ENCODE measurements at regions of chr5 and their contacts with region 1.

Region 1: GRCh38 chr5:171630027-171630669 is 155.5 kb upstream of the SMIM23 start:
- DNase-seq: peak; percentile 61
- H3K4me3 ChIP-seq: peak overlapping the region in 2 of 3 experiments; percentile 14 to 36
- H3K27ac ChIP-seq: no peak overlapping the region
- H3K4me1 ChIP-seq: peaks cover 9% of the 10 kb centered on the region
- H3K27me3 ChIP-seq: peaks cover 4 to 20% of the 10 kb centered on the region in 2 experiments
- CTCF ChIP-seq: peak; percentile 55 to 74
- POLR2A ChIP-seq: no peak

Region 2: GRCh38 chr5:170892196-170892595 is 738.0 kb before region 1 on chr5:
- CTCF ChIA-PET with region 1: no interaction called
- POLR2A ChIA-PET with region 1: no interaction called
- dilution Hi-C with region 1: no loop called
- intact Hi-C with region 1: no loop called
- DNase-seq: peak; percentile 57
- H3K4me3 ChIP-seq: no peak overlapping the region
- H3K27ac ChIP-seq: peak overlapping the region; percentile 57
- H3K4me1 ChIP-seq: peaks cover 6% of the 10 kb centered on the region
- H3K27me3 ChIP-seq: no peaks in the 10 kb centered on the region
- CTCF ChIP-seq: no peak
- POLR2A ChIP-seq: no peak

Region 3: GRCh38 chr5:171450423-171451331 is 179.5 kb before region 1 on chr5:
- CTCF ChIA-PET with region 1: no interaction called
- POLR2A ChIA-PET with region 1: no interaction called
- dilution Hi-C with region 1: no loop called
- intact Hi-C with region 1: loop called (anchors 1 kb)
- DNase-seq: peak; percentile 70
- H3K4me3 ChIP-seq: peak overlapping the region in 2 of 3 experiments; percentile 17 to 23
- H3K27ac ChIP-seq: peak overlapping the region; percentile 95
- H3K4me1 ChIP-seq: peaks cover 15% of the 10 kb centered on the region
- H3K27me3 ChIP-seq: peaks cover 0 to 2% of the 10 kb centered on the region in 2 experiments
- CTCF ChIP-seq: no peak
- POLR2A ChIP-seq: peak; percentile 32

Region 4: DNA sequence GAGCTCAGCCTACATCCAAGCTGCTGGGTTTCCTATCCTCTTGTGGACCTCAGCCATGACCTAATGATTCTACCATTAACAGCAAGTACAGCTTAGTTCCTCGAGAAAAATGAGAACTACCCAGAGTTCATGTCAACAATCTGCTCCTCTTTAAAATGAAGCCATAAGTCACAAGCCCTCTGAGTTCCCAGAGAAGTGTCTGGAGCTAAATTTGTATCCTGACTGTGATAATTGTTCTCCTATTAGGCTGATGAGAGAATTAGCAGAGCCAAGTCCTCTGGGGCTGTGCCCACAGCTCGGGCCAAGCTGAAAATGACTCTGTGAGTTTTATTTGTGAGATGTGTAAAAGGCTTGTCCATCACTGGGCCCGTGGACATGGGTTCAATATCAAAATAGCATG is 10.3 kb after region 1 on chr5:
- CTCF ChIA-PET with region 1: interaction called, 23 read pairs
- POLR2A ChIA-PET with region 1: no interaction called
- dilution Hi-C with region 1: no loop called
- intact Hi-C with region 1: no loop called
- DNase-seq: no peak
- H3K4me3 ChIP-seq: no peak overlapping the region
- H3K27ac ChIP-seq: no peak overlapping the region
- H3K4me1 ChIP-seq: no peaks in the 10 kb centered on the region
- H3K27me3 ChIP-seq: no peaks in the 10 kb centered on the region
- CTCF ChIP-seq: no peak
- POLR2A ChIP-seq: no peak

Region 5: DNA sequence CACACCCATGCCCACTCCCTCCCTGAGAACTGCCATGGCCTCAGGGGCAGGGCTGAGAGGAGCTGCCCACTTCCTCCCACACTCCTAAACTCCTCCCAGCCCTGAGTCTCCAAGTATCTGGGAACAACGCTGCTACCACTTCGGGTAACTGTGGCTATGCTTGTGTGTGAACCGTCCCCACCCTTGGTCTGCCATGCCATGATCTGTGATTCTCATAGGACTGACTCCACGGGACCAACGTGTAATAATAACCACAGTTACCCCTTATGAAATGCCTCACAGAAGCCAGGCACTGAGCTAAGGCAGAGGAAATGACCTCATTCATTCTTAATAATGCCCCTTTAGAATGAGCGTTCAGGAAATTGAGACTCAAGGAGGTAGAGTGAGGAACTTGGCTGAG is 51.5 kb after region 1 on chr5:
- CTCF ChIA-PET with region 1: interaction called, 18 read pairs
- POLR2A ChIA-PET with region 1: no interaction called
- dilution Hi-C with region 1: no loop called
- intact Hi-C with region 1: no loop called
- DNase-seq: peak; percentile 62
- H3K4me3 ChIP-seq: no peak overlapping the region
- H3K27ac ChIP-seq: peak overlapping the region; percentile 43
- H3K4me1 ChIP-seq: peaks cover 8% of the 10 kb centered on the region
- H3K27me3 ChIP-seq: no peaks in the 10 kb centered on the region
- CTCF ChIP-seq: no peak
- POLR2A ChIP-seq: no peak

Region 6: GRCh38 chr5:171898386-171898785 is 268.2 kb after region 1 on chr5:
- CTCF ChIA-PET with region 1: interaction called, 11 read pairs
- POLR2A ChIA-PET with region 1: no interaction called
- dilution Hi-C with region 1: no loop called
- intact Hi-C with region 1: no loop called
- DNase-seq: no peak
- H3K4me3 ChIP-seq: no peak overlapping the region
- H3K27ac ChIP-seq: no peak overlapping the region
- H3K4me1 ChIP-seq: no peaks in the 10 kb centered on the region
- H3K27me3 ChIP-seq: no peaks in the 10 kb centered on the region
- CTCF ChIP-seq: no peak
- POLR2A ChIP-seq: no peak

Region 7: DNA sequence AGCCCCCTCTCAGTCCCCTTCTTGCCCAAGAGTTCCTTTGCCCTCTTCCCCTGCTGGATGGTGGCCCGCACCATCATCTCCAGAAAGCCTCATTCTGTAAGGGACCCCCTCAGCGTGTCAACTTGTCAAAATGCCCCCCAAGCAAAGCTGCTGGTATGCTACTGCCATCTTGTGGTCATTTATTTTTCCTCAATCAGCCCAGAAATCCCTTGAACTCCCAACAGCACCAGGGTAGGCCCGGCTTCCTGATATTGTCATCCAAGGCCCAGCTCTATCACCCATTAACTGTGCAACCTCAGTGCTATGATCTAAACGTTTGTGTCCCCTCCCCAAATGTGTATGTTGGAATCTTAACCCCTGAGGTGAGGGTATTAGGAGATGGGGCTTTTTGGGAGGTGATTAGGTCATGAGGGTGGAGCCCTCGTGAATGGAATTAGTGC is 429.5 kb after region 1 on chr5:
- CTCF ChIA-PET with region 1: interaction called, 15 read pairs
- POLR2A ChIA-PET with region 1: no interaction called
- dilution Hi-C with region 1: no loop called
- intact Hi-C with region 1: no loop called
- DNase-seq: peak; percentile 35
- H3K4me3 ChIP-seq: no peak overlapping the region
- H3K27ac ChIP-seq: no peak overlapping the region
- H3K4me1 ChIP-seq: no peaks in the 10 kb centered on the region
- H3K27me3 ChIP-seq: no peaks in the 10 kb centered on the region
- CTCF ChIP-seq: peak; percentile 50 to 61
- POLR2A ChIP-seq: no peak

Region 8: DNA sequence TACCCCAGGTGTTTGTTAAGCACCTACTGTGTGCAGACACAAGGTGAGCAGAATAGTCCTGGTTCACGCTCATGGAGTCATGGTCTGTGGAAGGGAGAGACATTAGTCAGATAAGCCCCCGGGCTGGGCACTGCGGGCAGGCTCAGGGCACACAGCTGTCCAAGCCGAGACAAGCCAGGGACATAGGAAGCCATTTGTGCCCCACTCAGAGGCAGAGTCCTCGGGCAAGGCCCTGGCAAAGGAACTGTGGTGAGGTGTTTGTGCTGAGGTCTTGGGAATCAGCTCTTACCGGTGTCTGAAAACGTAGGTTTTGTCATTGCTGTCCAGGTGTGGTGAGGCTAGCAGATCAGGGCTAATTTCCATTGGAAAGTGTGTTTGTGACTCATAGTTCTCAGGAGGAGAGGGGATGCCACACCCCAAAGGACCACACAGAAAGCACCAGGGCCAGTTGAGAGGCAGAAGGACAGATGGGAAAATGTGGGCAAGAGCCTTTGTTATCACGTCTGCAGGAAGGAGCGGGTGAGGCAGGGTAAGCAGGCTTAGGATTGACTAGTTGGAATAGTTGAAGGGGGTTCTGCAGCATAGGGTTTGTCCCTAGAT is 964.8 kb after region 1 on chr5:
- CTCF ChIA-PET with region 1: no interaction called
- POLR2A ChIA-PET with region 1: no interaction called
- dilution Hi-C with region 1: no loop called
- intact Hi-C with region 1: no loop called
- DNase-seq: no peak
- H3K4me3 ChIP-seq: no peak overlapping the region
- H3K27ac ChIP-seq: no peak overlapping the region
- H3K4me1 ChIP-seq: no peaks in the 10 kb centered on the region
- H3K27me3 ChIP-seq: no peaks in the 10 kb centered on the region
- CTCF ChIP-seq: no peak
- POLR2A ChIP-seq: no peak